ENCODE measurements at regions of chr10 and their contacts with region 1.

Region 1: DNA sequence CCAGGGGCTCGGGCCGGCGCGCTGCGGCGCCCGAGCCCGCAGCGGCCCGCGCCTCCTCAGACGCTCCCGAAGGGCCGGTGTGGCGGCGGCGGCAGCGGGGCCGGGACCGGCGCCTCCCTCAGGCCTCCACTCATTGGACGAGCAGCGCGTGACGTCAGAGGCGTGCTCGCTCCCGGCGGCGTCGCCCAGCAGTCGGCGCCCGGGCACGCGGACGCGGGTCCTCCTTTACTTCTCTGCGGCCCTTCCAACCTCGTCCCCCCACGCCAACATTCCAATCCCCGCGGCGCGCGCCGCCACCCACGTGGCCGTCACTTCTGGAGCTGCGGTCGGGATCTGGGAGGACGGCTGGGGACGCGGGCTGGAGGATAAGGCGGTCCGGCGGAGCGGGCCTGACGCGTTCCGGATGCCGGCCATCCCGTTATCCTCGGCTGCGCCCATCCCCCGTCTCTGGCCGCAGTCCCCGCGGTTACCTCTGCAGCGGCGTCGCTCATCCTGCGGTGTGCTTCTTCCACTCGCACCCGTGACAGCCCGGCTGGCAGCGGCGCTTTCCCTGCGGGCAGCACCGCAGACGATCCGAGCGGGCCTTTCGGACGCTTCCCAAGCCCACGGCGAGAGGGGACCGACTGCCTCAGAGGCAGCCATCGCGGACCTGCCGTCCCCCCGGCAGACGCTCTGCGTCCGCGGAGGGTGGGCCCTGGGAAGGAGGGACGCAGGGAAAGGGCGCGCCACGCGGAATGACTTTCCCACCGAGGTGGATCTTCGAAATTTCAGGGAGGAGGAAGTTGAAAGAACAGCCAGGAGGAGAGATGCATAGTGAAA is at the start of gene PDZD8:
- DNase-seq: peak; percentile 91
- H3K4me3 Mint-ChIP-seq: peak within 1 kb of the TSS; percentile 92
- H3K27ac Mint-ChIP-seq: peak within 1 kb of the TSS; percentile 69
- H3K4me1 Mint-ChIP-seq: peaks cover 20% of the 10 kb centered on the region
- H3K27me3 Mint-ChIP-seq: peaks cover 12% of the 10 kb centered on the region
- total RNA-seq, gene PDZD8: 14.3 to 16.2 TPM

Region 2: DNA sequence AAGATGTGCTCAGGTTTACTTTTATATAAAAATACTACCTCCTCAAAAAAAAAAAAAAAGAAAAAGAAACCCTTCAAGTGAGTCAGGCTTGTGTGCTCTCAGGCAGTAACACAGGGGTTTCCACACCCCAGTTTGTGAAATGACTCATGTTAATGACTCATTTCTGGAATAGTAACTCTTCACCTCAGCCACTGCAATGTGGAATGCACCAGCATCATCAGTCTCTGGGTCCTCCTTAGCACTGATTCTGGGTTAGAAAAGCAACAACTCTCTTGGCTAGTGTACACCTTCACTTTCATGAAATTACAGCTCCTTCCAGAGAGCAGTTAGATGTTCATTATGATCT is 277.6 kb after region 1 on chr10:
- CTCF ChIA-PET with region 1: no interaction called
- POLR2A ChIA-PET with region 1: no interaction called
- intact Hi-C with region 1: loop called (anchors 10 kb)
- DNase-seq: peak; percentile 53
- H3K4me3 Mint-ChIP-seq: no peak overlapping the region
- H3K27ac Mint-ChIP-seq: no peak overlapping the region
- H3K4me1 Mint-ChIP-seq: peaks cover 14% of the 10 kb centered on the region
- H3K27me3 Mint-ChIP-seq: peaks cover 17% of the 10 kb centered on the region

Region 3: GRCh38 chr10:118046395-118047156 is 671.0 kb after region 1 on chr10 and contains the start of gene RAB11FIP2:
- CTCF ChIA-PET with region 1: no interaction called
- POLR2A ChIA-PET with region 1: no interaction called
- intact Hi-C with region 1: loop called (anchors 10 kb)
- DNase-seq: peak; percentile 96
- H3K4me3 Mint-ChIP-seq: peak within 1 kb of the TSS; percentile 89
- H3K27ac Mint-ChIP-seq: peak within 1 kb of the TSS; percentile 56
- H3K4me1 Mint-ChIP-seq: peaks cover 36% of the 10 kb centered on the region
- H3K27me3 Mint-ChIP-seq: no peaks in the 10 kb centered on the region
- total RNA-seq, gene RAB11FIP2: 7.5 to 9.4 TPM

Region 4: GRCh38 chr10:118341791-118342637 is 966.4 kb after region 1 on chr10 and contains the start of gene FAM204A:
- CTCF ChIA-PET with region 1: no interaction called
- POLR2A ChIA-PET with region 1: no interaction called
- intact Hi-C with region 1: loop called (anchors 5 kb)
- DNase-seq: peak; percentile 98
- H3K4me3 Mint-ChIP-seq: peak within 1 kb of the TSS; percentile 92
- H3K27ac Mint-ChIP-seq: peak within 1 kb of the TSS; percentile 87
- H3K4me1 Mint-ChIP-seq: peaks cover 42% of the 10 kb centered on the region
- H3K27me3 Mint-ChIP-seq: no peaks in the 10 kb centered on the region
- total RNA-seq, gene FAM204A: 63.5 to 64.8 TPM